ENCODE measurements at regions of chr7 and their contacts with region 1.

Region 1: DNA sequence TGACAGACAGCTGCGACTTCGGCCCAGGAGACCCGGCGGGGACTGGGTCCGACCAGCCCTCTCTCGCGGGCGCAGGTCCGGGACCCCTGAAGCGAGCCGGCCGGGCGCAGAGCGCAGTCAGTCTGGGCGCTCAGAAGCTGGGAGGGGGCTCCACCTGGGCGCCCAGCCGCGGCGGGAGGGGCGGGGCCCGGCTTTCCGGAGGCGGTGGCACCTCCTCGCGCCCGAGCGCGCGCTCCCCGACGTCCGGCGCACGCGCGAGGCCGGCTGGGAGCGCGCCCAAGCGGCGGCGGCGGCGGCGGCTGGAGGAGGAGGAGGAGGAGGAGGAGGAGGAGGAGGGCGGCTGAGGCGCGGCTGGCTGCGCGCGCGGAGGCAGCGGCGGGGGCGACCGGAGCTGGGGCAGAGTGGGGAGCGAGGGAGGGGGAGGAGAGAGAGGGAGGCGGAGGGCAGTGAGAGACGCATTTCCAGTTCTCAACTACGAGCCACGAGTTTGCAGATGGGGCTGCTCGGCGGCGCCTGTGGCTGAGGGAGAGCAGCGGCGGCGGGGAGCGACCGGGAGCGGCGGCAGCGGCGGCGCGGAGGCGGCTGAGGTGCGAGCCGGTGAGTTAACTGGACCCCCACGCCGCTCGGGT is at the start of gene PALS2:
- DNase-seq: peak; percentile 89
- CTCF ChIP-seq: no peak

Region 2: GRCh38 chr7:24336461-24336860 is 236.7 kb before region 1 on chr7:
- CTCF ChIA-PET with region 1: no interaction called
- POLR2A ChIA-PET with region 1: no interaction called
- DNase-seq: no peak
- CTCF ChIP-seq: no peak

Region 3: DNA sequence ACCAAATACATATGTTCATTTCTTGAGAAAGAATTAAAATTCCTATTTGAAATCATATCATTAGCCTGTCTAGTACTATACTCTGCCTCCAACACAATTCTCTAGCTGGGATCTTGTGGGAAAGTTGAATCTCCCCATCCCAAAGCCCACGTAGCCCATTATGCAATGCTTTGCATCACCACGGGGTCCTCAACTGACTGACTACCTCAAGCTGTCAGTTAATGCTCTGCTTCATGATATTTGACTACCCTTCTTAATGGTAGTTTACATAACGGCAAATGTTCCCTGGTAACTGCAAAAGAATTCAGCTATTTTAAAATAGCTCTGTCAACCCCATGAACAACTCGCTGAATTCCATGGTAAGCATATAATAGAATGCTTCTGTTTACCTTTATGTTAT is 23.1 kb before region 1 on chr7:
- CTCF ChIA-PET with region 1: no interaction called
- POLR2A ChIA-PET with region 1: no interaction called
- DNase-seq: no peak
- CTCF ChIP-seq: no peak

Region 4: GRCh38 chr7:24587848-24588247 is 14.7 kb after region 1 on chr7:
- CTCF ChIA-PET with region 1: interaction called, 55 read pairs
- POLR2A ChIA-PET with region 1: no interaction called
- DNase-seq: no peak
- CTCF ChIP-seq: peak; percentile 49

Region 5: DNA sequence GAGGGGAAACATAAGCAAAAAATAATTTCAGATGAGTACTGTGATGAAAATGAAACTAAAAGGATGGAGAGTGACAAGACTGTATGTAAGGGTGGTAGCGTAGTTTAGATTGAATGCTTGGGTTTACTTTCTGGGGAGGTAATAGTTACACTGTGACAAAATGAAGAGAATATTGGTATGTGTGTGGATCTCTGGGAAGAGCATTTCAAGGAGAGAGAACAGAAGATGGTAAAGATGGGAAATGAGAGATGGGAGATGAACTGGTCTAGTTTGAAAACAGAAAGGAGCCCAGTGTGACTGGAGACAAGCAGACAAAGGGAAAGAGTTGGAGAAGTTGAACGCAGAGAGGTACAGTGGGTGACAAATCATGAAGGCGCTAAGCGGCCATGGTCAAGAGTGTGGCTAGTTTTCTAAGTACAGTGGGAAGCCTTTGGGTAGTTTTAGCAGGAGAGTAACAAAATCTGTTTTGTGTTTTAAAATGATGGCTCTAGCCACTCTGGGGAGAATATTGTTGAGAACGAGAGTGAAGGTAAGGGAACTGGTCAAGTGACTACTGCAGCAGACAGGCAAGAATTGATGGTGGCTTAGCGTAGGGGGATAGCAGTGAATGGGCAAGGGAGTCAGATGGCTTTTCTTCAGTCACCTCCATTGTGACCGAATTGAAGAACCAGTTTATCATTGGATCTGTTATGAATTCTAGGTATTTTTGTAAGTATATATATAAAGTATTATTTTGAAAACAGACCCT is 22.7 kb after region 1 on chr7:
- CTCF ChIA-PET with region 1: interaction called, 29 read pairs
- POLR2A ChIA-PET with region 1: interaction called, 4 read pairs
- DNase-seq: no peak
- CTCF ChIP-seq: no peak

Region 6: GRCh38 chr7:24601600-24601999 is 28.5 kb after region 1 on chr7:
- CTCF ChIA-PET with region 1: interaction called, 14 read pairs
- POLR2A ChIA-PET with region 1: interaction called, 4 read pairs
- DNase-seq: no peak
- CTCF ChIP-seq: no peak

Region 7: GRCh38 chr7:24979419-24979862 is 406.3 kb after region 1 on chr7:
- CTCF ChIA-PET with region 1: no interaction called
- POLR2A ChIA-PET with region 1: no interaction called
- DNase-seq: peak; percentile 75
- CTCF ChIP-seq: peak; percentile 71